ENCODE measurements at regions of chr20 and their contacts with region 1.

Region 1: DNA sequence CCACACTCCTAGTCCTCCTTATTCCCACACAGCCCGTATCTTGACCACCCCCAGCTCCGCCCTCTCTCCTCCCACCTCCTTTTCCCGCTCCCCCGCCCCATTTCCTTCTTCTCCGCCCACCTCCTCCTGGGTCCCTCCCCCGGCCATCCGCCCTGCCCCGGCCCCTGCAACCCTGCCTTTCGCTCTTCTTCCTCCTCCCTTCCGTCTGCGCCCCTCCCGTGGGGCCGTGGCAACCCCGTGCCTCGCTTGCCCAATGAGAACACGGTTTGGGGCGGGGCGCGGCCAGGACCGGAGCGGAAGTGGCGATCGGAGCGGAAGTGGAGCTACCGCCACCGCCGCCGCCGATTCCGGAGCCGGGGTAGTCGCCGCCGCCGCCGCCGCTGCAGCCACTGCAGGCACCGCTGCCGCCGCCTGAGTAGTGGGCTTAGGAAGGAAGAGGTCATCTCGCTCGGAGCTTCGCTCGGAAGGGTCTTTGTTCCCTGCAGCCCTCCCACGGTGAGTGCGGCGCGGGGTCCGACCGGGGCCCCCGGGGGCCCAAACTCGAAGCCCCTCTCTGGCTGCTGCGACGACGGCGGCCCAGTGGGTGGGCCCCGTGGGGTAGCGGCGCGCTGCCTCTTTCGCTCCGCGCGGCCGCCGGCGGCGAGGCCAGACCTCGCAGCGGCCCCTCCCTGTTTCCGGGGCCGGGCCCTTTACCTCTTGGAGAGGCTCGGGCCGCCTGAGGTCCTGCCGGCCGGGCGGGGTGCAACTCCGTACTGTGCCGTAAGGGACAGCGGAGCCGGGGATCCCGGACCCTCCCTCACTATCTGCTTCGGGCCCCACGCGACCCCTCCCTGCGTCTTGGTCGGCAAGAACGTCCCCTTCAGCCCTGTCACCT is at the start of gene YWHAB:
- DNase-seq: peak; percentile 100
- ATAC-seq: peak; percentile 99
- total RNA-seq, gene YWHAB: 110 TPM

Region 2: GRCh38 chr20:44747166-44748004 is 138.2 kb before region 1 on chr20:
- intact Hi-C with region 1: no loop called
- DNase-seq: no peak
- ATAC-seq: peak; percentile 35

Region 3: DNA sequence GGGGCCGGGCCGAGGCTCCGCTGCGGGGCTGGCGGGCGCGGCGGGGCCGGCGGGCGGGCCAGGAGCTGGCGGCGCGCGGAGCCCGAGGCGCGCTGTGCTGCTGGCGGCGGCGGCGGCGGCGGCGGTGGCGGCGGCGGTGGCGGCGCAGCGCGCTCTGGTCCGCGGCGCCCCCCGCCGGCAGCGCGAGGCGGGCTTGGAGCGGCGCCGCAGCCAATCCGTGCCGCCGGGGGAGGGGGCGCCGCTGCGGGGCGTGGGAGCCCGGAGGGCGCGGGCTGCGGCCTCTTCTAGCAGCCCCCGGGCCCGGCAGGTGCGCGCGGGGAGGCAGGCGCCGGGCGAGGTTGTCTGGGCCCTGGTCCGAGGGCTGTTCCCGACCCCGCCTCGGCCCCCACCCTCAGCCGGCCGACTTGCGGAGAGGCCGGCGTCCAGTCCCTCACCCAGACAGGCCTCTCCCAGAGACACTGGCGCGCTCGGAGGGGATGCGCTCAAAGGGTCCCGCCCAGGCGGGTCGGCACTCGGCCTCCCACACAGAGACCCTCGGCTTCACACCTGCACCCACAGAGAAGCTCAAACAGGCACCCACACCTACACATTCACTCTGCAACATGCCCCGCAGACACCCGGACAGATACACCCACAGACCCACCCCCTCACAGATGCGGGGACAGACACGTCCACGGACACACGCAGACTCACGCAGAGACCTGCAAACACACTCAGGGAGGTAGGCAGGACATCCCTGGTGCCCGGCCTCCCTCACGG is 75.1 kb before region 1 on chr20 and contains the start of gene RIMS4:
- intact Hi-C with region 1: no loop called
- DNase-seq: no peak
- ATAC-seq: no peak
- total RNA-seq, gene RIMS4: not detected

Region 4: DNA sequence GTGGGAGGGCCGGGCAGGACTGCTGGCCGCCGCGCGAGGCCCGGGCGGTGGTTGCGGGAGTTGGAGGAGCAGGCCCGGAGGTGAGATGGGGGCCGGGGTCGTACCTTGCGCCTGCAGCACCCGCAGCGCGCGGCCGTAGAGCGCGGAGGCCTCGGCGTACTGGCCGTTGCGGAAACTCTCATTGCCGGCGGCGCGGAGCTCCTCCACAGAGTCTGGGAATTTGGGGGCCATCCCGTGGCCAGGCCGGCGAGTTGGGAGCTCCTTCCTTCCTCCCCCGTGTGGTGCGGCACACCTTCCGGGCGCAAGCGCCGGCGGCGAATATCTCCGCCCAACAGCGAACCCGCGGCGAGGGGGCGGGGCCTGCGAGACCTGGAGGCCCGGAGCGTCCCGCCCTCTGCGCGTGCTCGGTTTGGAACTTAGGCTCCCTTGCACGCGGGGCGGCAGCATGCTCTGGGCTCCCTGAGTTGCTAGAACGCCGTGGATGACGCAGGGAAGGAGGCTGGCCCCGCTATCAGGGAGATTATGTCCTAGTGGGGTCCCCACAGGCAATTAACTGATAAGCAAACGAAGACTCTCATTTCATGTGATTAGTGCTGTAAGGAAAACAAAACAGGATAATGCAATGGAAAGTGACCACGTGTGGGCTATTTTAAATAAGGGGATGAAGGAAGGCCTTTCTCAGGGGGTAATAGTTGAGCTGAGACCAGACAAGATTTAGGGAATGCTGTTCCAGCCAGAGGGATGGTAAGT is 74.6 kb after region 1 on chr20 and contains the start of gene TOMM34:
- intact Hi-C with region 1: loop called (anchors 5 kb)
- DNase-seq: peak; percentile 99
- ATAC-seq: peak; percentile 98
- total RNA-seq, gene TOMM34: 10.3 TPM

Measured in Right ventricle myocardium inferior (tissue), 1 donor.